ENCODE measurements at regions of chr14 and their contacts with region 1.

Region 1: DNA sequence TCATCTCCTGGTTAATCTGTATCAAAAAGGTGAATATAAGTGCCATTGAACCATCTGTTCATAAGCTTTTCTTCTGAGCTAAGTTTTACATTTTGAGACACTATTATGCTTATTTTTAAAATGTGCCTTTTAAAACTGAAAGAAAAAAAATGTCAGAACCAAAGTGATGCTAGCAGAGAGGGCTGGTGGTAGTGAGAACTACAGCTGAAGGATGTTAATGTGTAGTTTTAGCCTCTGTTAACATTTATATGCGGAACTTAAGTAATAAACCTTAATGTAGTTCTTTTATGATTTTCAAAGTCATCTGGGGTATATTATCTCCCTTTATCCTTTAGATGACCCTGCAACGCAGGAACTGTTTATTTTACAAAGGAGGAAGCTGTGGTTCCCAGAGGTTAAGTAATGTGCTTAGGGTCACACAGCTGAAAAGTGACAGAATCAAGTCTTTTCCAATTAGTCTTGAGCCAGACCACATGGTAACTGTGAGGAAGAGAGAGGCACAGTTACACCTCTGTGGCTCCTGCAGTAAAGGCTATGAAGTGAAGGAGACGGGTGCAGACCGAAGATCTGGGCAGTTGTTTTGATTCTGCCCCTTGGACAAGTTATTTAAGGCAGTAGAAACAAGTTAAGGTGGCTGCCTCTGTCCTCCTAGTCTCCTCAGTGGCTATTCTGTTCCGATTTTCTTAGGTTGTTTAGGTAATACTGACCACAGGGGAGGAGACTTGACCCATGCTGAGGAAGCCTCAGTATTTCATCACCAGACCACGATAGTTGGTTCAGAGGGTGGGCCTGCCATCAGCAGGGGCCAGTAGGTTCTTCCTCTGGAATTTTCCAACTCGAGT is 23.9 kb downstream of the GNG2 start:
- DNase-seq: peak in 1 of 9 experiments; percentile 50
- ATAC-seq: peak; percentile 55
- H3K4me3 ChIP-seq: no peak overlapping the region
- H3K4me3 Mint-ChIP-seq: peak overlapping the region; percentile 61
- H3K27ac ChIP-seq: peak overlapping the region in 1 of 2 experiments; percentile 63
- H3K27ac Mint-ChIP-seq: peak overlapping the region; percentile 79
- H3K4me1 ChIP-seq: peaks cover 51% of the 10 kb centered on the region
- H3K4me1 Mint-ChIP-seq: peaks cover 81% of the 10 kb centered on the region
- H3K27me3 ChIP-seq: no peaks in the 10 kb centered on the region
- H3K27me3 Mint-ChIP-seq: no peaks in the 10 kb centered on the region
- CTCF ChIP-seq: no peak

Region 2: GRCh38 chr14:51834240-51834639 is 50.1 kb before region 1 on chr14:
- CTCF ChIA-PET with region 1: no interaction called
- POLR2A ChIA-PET with region 1: no interaction called
- intact Hi-C with region 1: no loop called
- DNase-seq: no peak
- ATAC-seq: no peak
- H3K4me3 ChIP-seq: no peak overlapping the region
- H3K4me3 Mint-ChIP-seq: no peak overlapping the region
- H3K27ac ChIP-seq: no peak overlapping the region
- H3K27ac Mint-ChIP-seq: no peak overlapping the region
- H3K4me1 ChIP-seq: no peaks in the 10 kb centered on the region
- H3K4me1 Mint-ChIP-seq: no peaks in the 10 kb centered on the region
- H3K27me3 ChIP-seq: no peaks in the 10 kb centered on the region
- H3K27me3 Mint-ChIP-seq: no peaks in the 10 kb centered on the region
- CTCF ChIP-seq: no peak

Region 3: DNA sequence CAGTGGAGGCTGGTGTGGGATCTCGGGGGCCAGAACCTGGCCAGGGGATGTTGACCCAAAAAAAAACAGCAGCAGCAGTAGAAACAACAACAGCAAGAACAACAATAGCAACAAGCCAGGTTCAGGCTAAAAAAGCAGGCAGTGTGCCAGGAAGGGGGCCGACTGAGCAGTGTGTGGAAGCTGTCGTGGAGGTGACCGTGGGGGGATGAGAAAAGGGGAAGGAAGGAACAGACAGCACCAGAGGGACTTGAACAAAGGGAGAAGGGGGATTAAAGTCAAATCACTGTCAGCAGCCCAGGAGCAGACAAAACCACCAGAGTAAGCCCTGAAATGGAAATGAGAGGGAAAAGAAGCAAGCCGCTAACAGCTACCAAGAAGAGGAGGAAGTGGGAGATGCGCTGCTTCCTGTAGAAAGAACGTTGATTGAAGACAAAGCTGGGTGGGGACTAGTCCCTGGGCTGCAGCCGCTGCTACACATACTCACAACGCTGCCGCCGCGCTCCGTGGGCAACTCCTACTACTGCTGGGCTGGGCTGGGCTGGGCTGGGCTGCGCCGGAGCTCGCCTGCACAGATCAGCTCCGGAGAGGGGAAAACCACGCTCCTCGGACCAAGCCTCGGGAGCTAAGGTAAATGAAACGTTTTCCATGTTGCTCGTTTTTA is 24.0 kb before region 1 on chr14 and contains the start of gene GNG2:
- CTCF ChIA-PET with region 1: interaction called, 4 read pairs
- POLR2A ChIA-PET with region 1: interaction called, 9 read pairs
- intact Hi-C with region 1: loop called in 1 of 2 experiments (anchors 2 kb)
- DNase-seq: peak; percentile 71 to 94 (median 83)
- ATAC-seq: peak; percentile 95
- H3K4me3 ChIP-seq: peak within 1 kb of the TSS; percentile 86 to 90
- H3K4me3 Mint-ChIP-seq: peak within 1 kb of the TSS; percentile 98
- H3K27ac ChIP-seq: peak within 1 kb of the TSS; percentile 88
- H3K27ac Mint-ChIP-seq: peak within 1 kb of the TSS; percentile 95
- H3K4me1 ChIP-seq: peaks cover 50% of the 10 kb centered on the region
- H3K4me1 Mint-ChIP-seq: peaks cover 66% of the 10 kb centered on the region
- H3K27me3 ChIP-seq: no peaks in the 10 kb centered on the region
- H3K27me3 Mint-ChIP-seq: no peaks in the 10 kb centered on the region
- CTCF ChIP-seq: no peak
- total RNA-seq, gene GNG2: 166 to 169 TPM

Region 4: GRCh38 chr14:51865953-51866747 is 18.2 kb before region 1 on chr14:
- CTCF ChIA-PET with region 1: interaction called, 4 read pairs
- POLR2A ChIA-PET with region 1: interaction called, 9 read pairs
- intact Hi-C with region 1: loop called (anchors 2 kb)
- DNase-seq: peak in 2 of 9 experiments; percentile 79 to 84
- ATAC-seq: peak; percentile 56
- H3K4me3 ChIP-seq: no peak overlapping the region
- H3K4me3 Mint-ChIP-seq: peak overlapping the region; percentile 26
- H3K27ac ChIP-seq: peak overlapping the region in 1 of 2 experiments; percentile 63
- H3K27ac Mint-ChIP-seq: no peak overlapping the region
- H3K4me1 ChIP-seq: peaks cover 82% of the 10 kb centered on the region
- H3K4me1 Mint-ChIP-seq: peaks cover 29% of the 10 kb centered on the region
- H3K27me3 ChIP-seq: no peaks in the 10 kb centered on the region
- H3K27me3 Mint-ChIP-seq: no peaks in the 10 kb centered on the region
- CTCF ChIP-seq: no peak

Region 5: DNA sequence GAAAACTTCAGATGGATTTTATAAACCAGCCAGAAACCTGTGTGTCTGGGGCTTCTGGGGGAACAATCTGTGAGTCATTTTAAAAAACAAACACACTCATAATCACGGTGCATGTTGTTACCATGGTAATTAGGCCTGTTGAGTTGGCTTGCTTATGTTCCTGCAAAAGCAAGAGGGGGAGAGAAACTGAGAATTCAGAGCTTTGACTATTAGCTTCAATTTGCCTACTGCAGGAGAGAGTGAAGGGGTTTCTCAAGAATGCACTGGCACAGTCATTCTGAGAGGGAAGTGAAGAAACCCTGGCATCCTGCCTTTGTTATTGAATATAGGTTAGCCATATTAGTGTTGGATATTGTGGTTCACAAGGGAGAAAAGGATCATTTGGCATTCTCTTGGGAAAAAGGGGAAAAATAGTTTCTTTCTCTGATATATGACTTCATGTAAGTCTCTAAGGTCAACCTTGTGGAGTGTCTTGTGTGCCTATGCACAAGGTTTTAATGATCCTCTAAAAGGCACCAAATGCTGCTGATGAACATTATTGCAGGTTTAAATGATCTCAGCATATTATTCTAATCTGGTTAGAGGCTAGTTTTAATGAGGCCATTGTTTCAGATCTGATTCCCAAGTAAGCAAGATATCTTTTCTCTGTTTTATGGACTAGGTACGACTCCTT is 10.9 kb before region 1 on chr14:
- CTCF ChIA-PET with region 1: no interaction called
- POLR2A ChIA-PET with region 1: interaction called, 5 read pairs
- intact Hi-C with region 1: loop called in 1 of 2 experiments (anchors 1 kb)
- DNase-seq: peak in 3 of 9 experiments; percentile 22 to 77 (median 66)
- ATAC-seq: peak; percentile 57
- H3K4me3 ChIP-seq: no peak overlapping the region
- H3K4me3 Mint-ChIP-seq: no peak overlapping the region
- H3K27ac ChIP-seq: peak overlapping the region in 1 of 2 experiments; percentile 49
- H3K27ac Mint-ChIP-seq: peak overlapping the region; percentile 58
- H3K4me1 ChIP-seq: peaks cover 66% of the 10 kb centered on the region
- H3K4me1 Mint-ChIP-seq: peaks cover 54% of the 10 kb centered on the region
- H3K27me3 ChIP-seq: no peaks in the 10 kb centered on the region
- H3K27me3 Mint-ChIP-seq: no peaks in the 10 kb centered on the region
- CTCF ChIP-seq: no peak

Region 6: GRCh38 chr14:51901475-51902024 is 17.2 kb after region 1 on chr14:
- CTCF ChIA-PET with region 1: no interaction called
- POLR2A ChIA-PET with region 1: interaction called, 6 read pairs
- intact Hi-C with region 1: loop called in 1 of 2 experiments (anchors 2 kb)
- DNase-seq: peak in 5 of 9 experiments; percentile 14 to 74 (median 50)
- ATAC-seq: peak; percentile 76
- H3K4me3 ChIP-seq: no peak overlapping the region
- H3K4me3 Mint-ChIP-seq: peak overlapping the region; percentile 11
- H3K27ac ChIP-seq: peak overlapping the region in 1 of 2 experiments; percentile 34
- H3K27ac Mint-ChIP-seq: peak overlapping the region; percentile 71
- H3K4me1 ChIP-seq: peaks cover 29% of the 10 kb centered on the region
- H3K4me1 Mint-ChIP-seq: peaks cover 70% of the 10 kb centered on the region
- H3K27me3 ChIP-seq: no peaks in the 10 kb centered on the region
- H3K27me3 Mint-ChIP-seq: no peaks in the 10 kb centered on the region
- CTCF ChIP-seq: no peak